Cardiac septum (tissue), 1 donor: ENCODE measurements at regions of chr6 and their contacts with region 1.

Region 1: DNA sequence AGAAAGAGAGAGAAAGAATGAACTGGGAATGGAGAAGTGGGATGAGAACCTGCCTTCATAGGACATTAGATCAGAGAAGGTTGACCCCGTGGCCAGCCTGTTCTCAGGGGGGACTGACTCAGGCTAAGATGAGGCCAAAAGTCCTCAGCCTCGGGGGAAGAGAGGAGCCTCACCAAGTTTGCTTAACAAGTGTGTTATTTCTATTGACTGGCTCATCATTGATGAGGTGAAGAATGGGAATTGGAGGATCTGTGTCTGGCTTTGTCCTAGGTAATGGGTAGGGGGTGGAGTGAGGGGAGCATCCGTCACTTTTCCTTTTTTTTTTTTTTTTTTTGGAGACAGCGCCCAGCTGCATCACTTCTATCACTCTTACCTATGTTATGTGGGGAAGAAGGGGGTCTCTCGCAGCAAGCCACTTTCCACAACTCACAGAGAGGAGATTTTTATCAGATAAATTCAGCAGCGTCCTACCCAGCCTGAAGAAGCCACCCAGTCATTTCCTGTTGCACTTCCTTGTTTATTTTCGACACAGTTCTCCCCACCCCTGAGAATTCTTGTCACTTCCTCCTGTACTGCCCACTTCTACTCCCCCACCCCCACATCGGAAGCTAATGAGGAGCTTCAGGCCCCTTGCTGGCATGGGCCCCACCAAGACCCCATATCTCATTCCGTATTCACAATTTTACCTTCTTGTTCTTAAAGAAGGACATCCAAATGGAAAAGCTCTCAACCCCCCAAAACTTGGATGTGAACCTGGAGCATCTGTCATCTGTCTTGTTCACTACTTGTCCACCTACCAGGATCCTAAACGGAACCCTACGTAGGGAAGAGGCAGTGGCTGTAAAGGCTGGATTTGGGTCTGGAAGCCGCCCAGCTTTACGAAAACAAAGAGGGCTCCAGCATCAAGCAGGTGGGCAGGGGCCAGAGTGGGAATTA is 2.8 kb upstream of the RNASET2 start:
- DNase-seq: peak; percentile 78

Region 2: DNA sequence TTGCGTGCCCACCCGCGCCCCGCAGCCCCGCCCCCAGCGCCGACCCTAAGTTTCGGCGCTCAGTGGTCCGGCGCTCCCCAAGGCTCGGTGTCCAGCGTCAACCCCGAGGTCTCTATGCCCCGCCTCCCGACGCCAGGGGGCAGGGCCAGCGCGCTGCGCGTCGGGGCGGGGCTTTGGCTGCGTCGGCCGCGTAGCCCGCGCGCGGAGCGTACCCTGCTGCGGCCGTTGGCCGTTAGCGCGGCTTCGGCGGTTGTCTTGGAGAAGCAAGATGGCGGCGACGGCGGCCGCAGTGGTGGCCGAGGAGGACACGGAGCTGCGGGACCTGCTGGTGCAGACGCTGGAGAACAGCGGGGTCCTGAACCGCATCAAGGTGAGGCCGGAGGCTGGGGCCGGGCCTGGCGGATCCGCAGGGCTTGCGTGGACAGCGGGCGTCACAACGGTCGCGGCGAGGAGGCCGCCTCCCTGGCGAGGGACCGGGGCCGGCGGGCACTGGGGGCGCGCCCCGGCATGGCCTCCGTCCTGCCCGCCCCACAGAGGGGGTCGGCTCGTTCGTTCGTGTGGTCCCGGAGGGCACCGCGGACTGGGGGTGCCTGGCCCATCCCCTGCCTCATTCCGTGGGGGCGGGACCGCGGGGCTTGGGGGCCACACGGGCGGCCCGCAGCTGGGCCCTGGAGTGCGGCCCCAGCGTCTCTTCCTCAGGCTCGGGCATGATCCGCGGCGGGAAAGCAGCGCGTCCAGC is 40.1 kb after region 1 on chr6 and contains the start of gene CEP43:
- intact Hi-C with region 1: loop called (anchors 2 kb)
- DNase-seq: peak; percentile 97
- total RNA-seq, gene CEP43: 10.2 TPM